ENCODE measurements at regions of chr7 and their contacts with region 1.

Region 1: GRCh38 chr7:35537067-35538023 is 157.6 kb downstream of the HERPUD2 start:
- H3K4me3 Mint-ChIP-seq: peak overlapping the region; percentile 4
- H3K27ac Mint-ChIP-seq: no peak overlapping the region
- H3K4me1 Mint-ChIP-seq: no peaks in the 10 kb centered on the region
- H3K27me3 Mint-ChIP-seq: peaks cover 34% of the 10 kb centered on the region

Region 2: DNA sequence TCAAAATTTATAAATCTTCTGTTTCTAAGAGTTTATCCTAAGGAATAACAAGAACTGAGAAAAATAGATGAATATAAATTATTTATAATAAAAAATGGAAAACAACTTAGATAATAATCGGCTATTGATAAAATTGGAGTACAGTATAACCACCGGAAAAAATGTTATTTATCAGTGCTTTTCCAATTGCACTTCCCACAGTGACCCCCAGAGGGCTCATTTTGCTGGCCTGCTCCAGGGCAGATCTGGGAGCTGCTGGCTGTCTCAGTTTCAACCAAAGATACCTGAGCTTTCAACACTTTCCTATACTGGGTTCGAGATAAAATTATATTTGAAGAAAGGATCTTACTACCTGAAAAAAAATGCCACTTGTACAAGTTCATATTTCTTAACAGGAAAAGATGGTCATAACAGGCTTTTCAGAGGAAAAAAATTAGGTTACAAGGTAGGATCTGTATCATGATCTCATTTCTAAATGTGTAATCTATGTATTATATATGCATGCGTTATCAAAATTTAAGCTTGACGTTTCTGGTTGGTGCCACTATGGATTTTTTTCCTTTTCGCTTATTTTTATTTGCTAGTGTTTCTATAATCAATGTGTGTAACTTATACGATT is 713.6 kb before region 1 on chr7:
- intact Hi-C with region 1: loop called (anchors 5 kb)
- H3K4me3 Mint-ChIP-seq: no peak overlapping the region
- H3K27ac Mint-ChIP-seq: no peak overlapping the region
- H3K4me1 Mint-ChIP-seq: no peaks in the 10 kb centered on the region
- H3K27me3 Mint-ChIP-seq: no peaks in the 10 kb centered on the region

Region 3: GRCh38 chr7:35424869-35425495 is 112.4 kb before region 1 on chr7:
- intact Hi-C with region 1: loop called (anchors 1 kb)
- H3K4me3 Mint-ChIP-seq: no peak overlapping the region
- H3K27ac Mint-ChIP-seq: no peak overlapping the region
- H3K4me1 Mint-ChIP-seq: no peaks in the 10 kb centered on the region
- H3K27me3 Mint-ChIP-seq: peaks cover 4% of the 10 kb centered on the region

Region 4: DNA sequence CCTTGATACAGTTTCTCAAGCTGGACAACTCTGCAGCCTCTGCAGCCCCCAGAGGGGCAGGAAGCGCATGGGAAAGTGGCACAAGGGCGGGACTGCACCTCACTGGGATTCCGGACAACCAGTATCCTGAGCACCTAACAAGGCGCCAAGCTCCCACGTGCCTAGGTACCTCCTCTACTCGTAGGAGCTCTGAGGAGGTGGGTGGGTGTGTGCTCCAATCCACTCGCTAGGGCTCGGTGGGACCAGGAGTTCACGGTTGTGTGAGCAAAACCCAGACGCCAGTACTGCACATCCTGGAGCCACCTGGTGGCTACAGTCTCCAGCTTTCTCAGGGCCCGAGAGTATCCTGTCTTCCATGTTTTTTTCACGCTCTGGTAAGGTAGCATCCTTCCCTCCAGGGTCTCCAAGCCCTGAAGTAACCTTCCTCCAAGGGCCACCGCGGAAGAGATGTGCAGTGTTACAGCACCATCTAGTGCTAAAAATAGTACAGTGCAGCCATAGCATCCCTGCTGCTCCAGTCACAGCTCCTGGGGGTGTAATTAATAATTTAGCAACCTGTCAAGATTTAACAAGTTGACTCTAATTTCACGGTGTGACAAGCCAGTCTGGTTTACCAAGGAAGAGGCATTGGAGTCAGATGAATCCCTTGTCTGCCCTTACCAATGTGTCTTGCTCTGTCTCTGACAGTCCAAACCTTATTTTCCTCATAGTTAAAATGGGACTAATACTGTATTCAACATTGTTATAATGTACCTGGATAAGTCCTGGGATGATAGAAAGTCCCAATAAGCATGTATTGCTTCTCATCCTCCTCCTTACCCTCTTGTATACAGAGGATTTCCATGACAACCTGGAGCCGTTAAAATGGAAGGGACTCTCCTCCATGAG is 87.2 kb after region 1 on chr7:
- intact Hi-C with region 1: loop called (anchors 1 kb)
- H3K4me3 Mint-ChIP-seq: no peak overlapping the region
- H3K27ac Mint-ChIP-seq: no peak overlapping the region
- H3K4me1 Mint-ChIP-seq: no peaks in the 10 kb centered on the region
- H3K27me3 Mint-ChIP-seq: no peaks in the 10 kb centered on the region